GM10248 (cell line): ENCODE measurements at regions of chr5 and their contacts with region 1.

Region 1: GRCh38 chr5:156920042-156920860 is 42.8 kb downstream of the TIMD4 start:
- DNase-seq: no peak
- CTCF ChIP-seq: no peak

Region 2: DNA sequence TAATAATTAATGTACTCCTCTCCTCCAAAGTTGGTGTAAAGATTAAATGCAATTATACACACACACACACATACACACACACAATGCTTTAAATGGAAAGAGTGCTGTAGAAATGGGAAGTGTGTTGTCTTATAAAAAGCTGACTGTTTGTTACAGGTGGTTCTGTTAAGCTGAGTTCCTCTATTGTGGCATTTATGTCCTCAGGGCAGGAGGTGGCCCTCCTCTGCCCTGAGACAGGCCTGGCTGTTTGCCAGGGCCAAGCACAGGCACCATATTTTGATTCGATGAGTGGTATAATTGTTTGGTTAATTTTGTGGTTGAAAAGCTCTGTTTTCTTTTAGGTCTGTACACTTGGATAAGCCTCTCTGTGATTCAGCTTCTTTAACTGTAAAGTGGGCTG is 1332.8 kb before region 1 on chr5:
- CTCF ChIA-PET with region 1: no interaction called
- POLR2A ChIA-PET with region 1: no interaction called
- DNase-seq: no peak
- CTCF ChIP-seq: no peak

Region 3: GRCh38 chr5:156942064-156942463 is 21.8 kb after region 1 on chr5:
- CTCF ChIA-PET with region 1: interaction called, 12 read pairs
- POLR2A ChIA-PET with region 1: no interaction called
- DNase-seq: peak; percentile 60
- CTCF ChIP-seq: no peak